Aorta (tissue), 5 donors: ENCODE measurements at regions of chr19 and their contacts with region 1.

Region 1: GRCh38 chr19:17135001-17135853 is 59.6 kb downstream of the MYO9B start:
- DNase-seq: peak; percentile 98 to 99
- ATAC-seq: peak; percentile 95
- H3K4me3 ChIP-seq: no peak overlapping the region
- H3K27ac ChIP-seq: peak overlapping the region; percentile 94 to 95
- H3K4me1 ChIP-seq: peaks cover 0 to 3% of the 10 kb centered on the region in 2 donors
- H3K27me3 ChIP-seq: no peaks in the 10 kb centered on the region

Region 2: GRCh38 chr19:17097593-17098126 is 37.6 kb before region 1 on chr19:
- intact Hi-C with region 1: loop called in 1 of 2 experiments (anchors 5 kb)
- DNase-seq: no peak
- ATAC-seq: peak; percentile 31
- H3K4me3 ChIP-seq: no peak overlapping the region
- H3K27ac ChIP-seq: peak overlapping the region in 1 of 2 donors; percentile 72
- H3K4me1 ChIP-seq: no peaks in the 10 kb centered on the region
- H3K27me3 ChIP-seq: no peaks in the 10 kb centered on the region

Region 3: GRCh38 chr19:17107525-17108452 is 27.4 kb before region 1 on chr19:
- intact Hi-C with region 1: loop called (anchors 2 to 5 kb)
- DNase-seq: peak; percentile 97
- ATAC-seq: peak; percentile 93
- H3K4me3 ChIP-seq: no peak overlapping the region
- H3K27ac ChIP-seq: peak overlapping the region; percentile 69 to 91
- H3K4me1 ChIP-seq: no peaks in the 10 kb centered on the region
- H3K27me3 ChIP-seq: no peaks in the 10 kb centered on the region